AG04449 (cell line): ENCODE measurements at regions of chrX and their contacts with region 1.

Region 1: GRCh38 chrX:109890895-109891502 is 111.9 kb upstream of the TMEM164 start:
- DNase-seq: no peak
- H3K4me3 ChIP-seq: no peak overlapping the region
- CTCF ChIP-seq: peak; percentile 77

Region 2: GRCh38 chrX:109475174-109475891 is 415.7 kb before region 1 on chrX:
- CTCF ChIA-PET with region 1: interaction called, 28 read pairs
- POLR2A ChIA-PET with region 1: no interaction called
- DNase-seq: no peak
- H3K4me3 ChIP-seq: no peak overlapping the region
- CTCF ChIP-seq: peak; percentile 47

Region 3: GRCh38 chrX:109635176-109635575 is 255.8 kb before region 1 on chrX:
- CTCF ChIA-PET with region 1: interaction called, 10 read pairs
- POLR2A ChIA-PET with region 1: no interaction called
- DNase-seq: no peak
- H3K4me3 ChIP-seq: no peak overlapping the region
- CTCF ChIP-seq: peak; percentile 33

Region 4: GRCh38 chrX:109679820-109680219 is 211.2 kb before region 1 on chrX:
- CTCF ChIA-PET with region 1: interaction called, 14 read pairs
- POLR2A ChIA-PET with region 1: no interaction called
- DNase-seq: no peak
- H3K4me3 ChIP-seq: no peak overlapping the region
- CTCF ChIP-seq: no peak

Region 5: DNA sequence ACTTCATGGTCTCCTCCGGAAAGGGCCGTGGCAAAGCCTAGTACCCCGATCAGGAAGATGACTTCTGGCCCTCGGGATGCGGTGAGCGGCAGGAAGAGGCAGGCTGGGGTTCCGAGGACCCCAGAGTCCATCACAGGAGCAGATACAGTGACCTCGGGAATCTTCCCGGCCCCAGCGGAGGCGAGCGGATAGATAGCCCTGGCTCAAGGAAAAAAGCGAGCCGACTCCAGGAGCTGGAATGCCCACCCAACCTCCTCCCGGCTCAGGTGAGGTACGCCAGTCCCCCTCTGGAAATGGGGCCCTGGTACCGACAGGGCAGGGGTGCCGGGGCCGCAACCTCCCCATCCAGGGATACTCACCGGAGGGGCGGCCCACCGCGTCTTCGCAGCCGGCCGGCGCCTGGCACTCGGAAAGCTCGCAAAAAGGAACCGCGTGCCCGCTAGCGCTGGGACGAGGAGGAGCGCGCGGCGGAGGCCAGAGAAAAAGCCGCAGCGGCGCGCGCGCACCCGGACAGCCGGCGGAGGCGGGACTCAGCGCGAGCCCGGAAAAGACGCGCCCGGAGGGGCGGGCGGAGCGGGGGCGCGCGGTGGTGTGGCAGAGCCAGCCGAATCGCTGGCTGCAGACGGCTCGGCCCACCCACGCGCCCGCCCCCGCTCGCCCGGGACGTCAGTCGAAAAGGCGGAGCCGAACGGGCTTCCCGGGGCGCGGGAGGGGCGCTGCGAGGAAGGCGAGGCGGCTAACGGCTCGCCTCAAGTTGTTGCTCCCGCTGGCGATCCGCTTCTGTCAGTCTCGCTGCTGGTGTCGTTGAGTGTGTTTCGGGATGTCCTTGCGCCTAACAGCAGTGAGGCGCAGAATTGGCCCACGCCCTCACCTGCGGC is 158.0 kb before region 1 on chrX and contains the start of gene ACSL4:
- CTCF ChIA-PET with region 1: interaction called, 10 read pairs
- POLR2A ChIA-PET with region 1: no interaction called
- DNase-seq: no peak
- H3K4me3 ChIP-seq: peak within 1 kb of the TSS; percentile 76
- CTCF ChIP-seq: no peak

Region 6: DNA sequence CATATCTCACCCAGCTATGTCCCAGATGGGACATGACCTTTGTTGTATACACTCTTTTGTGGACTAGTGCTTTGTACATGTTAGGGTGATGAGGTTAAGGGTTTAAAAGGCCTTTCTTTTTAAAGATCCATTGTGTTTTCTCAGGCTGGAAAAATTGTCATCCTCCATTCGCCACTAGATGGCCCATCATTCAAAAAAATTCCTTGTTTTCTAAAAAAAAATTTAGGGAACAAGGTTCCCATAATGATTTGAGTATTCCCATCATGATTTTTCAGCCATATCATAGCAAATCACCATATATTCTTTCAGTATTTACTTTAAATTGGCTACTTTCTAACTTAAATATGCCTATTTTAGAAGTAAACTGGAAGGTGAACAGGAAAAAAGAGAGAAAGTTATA is 20.0 kb after region 1 on chrX:
- CTCF ChIA-PET with region 1: interaction called, 16 read pairs
- POLR2A ChIA-PET with region 1: no interaction called
- DNase-seq: no peak
- H3K4me3 ChIP-seq: no peak overlapping the region
- CTCF ChIP-seq: no peak

Region 7: DNA sequence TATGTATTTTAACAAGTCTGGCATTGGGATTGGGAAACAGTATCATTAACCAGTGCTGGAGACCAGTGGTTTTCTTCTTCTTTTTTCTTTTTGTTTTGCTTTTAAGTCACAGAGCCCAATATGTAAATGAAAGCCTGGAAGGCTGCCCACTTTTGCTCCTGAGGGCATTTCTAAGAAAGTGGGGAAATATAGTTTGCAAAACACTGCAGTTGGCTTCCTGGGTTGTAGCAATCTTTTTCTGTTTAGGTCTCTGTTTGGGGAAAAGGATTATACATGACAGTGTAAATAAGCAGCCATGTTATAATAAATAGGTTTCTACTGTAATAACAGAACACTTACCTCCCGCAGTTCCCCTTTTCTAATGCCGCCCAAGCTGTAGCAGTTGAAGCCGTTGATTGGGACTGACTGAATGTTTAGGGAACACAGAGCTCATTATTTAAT is 217.4 kb after region 1 on chrX:
- CTCF ChIA-PET with region 1: no interaction called
- POLR2A ChIA-PET with region 1: no interaction called
- DNase-seq: no peak
- H3K4me3 ChIP-seq: no peak overlapping the region
- CTCF ChIP-seq: no peak